RWPE1 (cell line): ENCODE measurements at regions of chr11 and their contacts with region 1.

Region 1: GRCh38 chr11:66744485-66745340 is 15.7 kb upstream of the SPTBN2 start:
- DNase-seq: peak; percentile 89
- H3K27ac ChIP-seq: peak overlapping the region; percentile 99
- CTCF ChIP-seq: no peak

Region 2: DNA sequence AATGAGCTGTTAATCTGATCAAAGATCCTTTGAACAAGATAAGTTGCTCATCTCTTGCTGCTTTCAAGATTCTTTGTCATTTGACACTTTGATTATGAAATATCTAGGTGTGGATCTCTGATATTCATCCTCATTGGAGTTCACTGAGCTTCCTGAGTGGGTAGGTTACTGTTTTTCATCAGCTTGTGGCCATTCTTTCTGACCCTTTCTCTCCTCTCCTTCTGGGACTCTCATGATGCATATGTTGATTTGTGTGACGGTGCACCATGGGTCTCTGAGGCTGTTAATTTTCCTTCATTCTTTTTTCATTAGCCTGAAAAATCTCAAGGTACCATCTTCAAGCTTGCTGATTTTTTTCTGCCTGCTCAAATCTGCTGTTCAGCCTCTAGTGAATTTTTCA is 192.6 kb after region 1 on chr11:
- CTCF ChIA-PET with region 1: no interaction called
- POLR2A ChIA-PET with region 1: interaction called, 11 read pairs
- DNase-seq: no peak
- H3K27ac ChIP-seq: no peak overlapping the region
- CTCF ChIP-seq: no peak

Region 3: GRCh38 chr11:67126986-67127385 is 382.3 kb after region 1 on chr11:
- CTCF ChIA-PET with region 1: no interaction called
- POLR2A ChIA-PET with region 1: no interaction called
- DNase-seq: no peak
- H3K27ac ChIP-seq: peak overlapping the region; percentile 37; the same call in 1 of the 2 replicates
- CTCF ChIP-seq: no peak